Heart right ventricle (tissue), 16 donors: ENCODE measurements at regions of chr12 and their contacts with region 1.

Region 1: DNA sequence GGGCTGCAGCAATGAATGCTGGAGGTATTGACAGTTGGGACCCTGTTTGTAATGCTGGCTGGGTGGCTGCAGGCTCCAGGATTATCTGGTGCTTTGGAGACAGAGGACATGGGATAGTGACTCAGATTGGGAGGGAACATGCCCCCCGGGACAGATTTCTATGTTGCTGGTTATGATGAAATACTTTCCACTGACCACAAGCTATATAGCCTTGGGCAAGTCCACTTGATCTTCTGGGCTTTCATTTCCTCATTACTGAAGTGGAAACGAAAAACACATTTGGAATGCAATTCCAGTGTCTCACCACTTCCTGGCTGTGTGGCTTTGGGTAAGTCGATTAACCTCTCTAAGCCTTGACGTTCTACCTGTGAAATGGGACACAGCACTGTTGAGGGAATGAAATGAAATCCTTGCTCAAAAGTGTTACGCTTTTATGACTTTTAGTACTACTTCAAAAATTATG is 6.3 kb upstream of the TPCN1 start:
- DNase-seq: peak in 1 of 2 donors; percentile 65
- ATAC-seq: peak; percentile 71 to 98 (median 90)
- H3K4me3 ChIP-seq: no peak overlapping the region
- H3K27ac ChIP-seq: peak overlapping the region in 9 of 10 donors; percentile 1 to 68 (median 11)
- H3K4me1 ChIP-seq: peaks cover 0 to 62% (median 10%) of the 10 kb centered on the region in 9 donors
- H3K27me3 ChIP-seq: no peaks in the 10 kb centered on the region
- CTCF ChIP-seq: peak in 2 of 9 donors; percentile 12 to 24

Region 2: DNA sequence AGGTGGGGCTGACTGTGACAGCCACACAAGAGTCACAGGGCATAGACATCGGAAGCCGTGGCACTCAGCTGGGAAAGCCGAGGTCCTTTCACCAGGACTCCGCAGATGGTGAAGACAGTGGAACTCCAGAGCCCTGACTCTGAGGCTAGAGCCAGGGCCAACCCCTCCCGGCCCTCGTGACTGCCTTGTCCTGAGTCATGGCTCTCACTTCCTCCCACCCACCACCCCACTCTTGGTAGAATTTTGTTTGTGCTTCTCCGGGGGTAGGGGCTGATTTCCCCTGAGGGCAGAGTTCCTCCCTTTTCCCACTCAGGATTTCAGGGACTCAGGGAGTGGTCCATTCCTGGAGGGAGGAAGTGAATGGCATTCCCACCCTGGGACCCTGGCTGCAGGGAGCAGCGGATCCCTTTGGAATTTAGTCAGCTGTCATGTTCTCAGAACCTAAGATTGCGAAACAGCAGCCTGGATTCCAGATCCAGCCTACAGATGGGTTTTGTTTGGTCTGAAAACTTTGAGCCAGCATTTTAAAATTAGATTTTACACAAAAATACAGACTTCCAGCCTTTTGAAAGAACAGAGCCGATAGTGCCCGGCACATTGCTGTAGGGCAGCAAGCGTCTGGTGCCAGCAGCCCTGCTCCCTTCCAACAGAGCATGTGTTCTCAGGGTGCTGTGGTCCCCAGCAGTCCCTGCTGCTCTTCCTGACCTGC is 57.0 kb after region 1 on chr12:
- intact Hi-C with region 1: loop called in 1 of 10 experiments (anchors 10 kb)
- DNase-seq: peak; percentile 74 to 85
- ATAC-seq: peak; percentile 78 to 94 (median 90)
- H3K4me3 ChIP-seq: peak overlapping the region in 2 of 10 donors; percentile 2 to 11
- H3K27ac ChIP-seq: peak overlapping the region; percentile 46 to 92 (median 84)
- H3K4me1 ChIP-seq: peaks cover 11 to 46% (median 40%) of the 10 kb centered on the region in 9 donors
- H3K27me3 ChIP-seq: no peaks in the 10 kb centered on the region
- CTCF ChIP-seq: no peak

Region 3: GRCh38 chr12:113334786-113335540 is 120.0 kb after region 1 on chr12 and contains the start of gene SLC8B1:
- intact Hi-C with region 1: loop called in 1 of 10 experiments (anchors 10 kb)
- DNase-seq: peak; percentile 88 to 93
- ATAC-seq: peak; percentile 98 to 100 (median 99)
- H3K4me3 ChIP-seq: peak within 1 kb of the TSS; percentile 64 to 96 (median 80)
- H3K27ac ChIP-seq: peak within 1 kb of the TSS; percentile 37 to 94 (median 84)
- H3K4me1 ChIP-seq: peaks cover 0 to 40% (median 23%) of the 10 kb centered on the region in 9 donors
- H3K27me3 ChIP-seq: no peaks in the 10 kb centered on the region
- CTCF ChIP-seq: no peak
- total RNA-seq, gene SLC8B1: 7.2 to 15.0 (median 11.9) TPM

Region 4: DNA sequence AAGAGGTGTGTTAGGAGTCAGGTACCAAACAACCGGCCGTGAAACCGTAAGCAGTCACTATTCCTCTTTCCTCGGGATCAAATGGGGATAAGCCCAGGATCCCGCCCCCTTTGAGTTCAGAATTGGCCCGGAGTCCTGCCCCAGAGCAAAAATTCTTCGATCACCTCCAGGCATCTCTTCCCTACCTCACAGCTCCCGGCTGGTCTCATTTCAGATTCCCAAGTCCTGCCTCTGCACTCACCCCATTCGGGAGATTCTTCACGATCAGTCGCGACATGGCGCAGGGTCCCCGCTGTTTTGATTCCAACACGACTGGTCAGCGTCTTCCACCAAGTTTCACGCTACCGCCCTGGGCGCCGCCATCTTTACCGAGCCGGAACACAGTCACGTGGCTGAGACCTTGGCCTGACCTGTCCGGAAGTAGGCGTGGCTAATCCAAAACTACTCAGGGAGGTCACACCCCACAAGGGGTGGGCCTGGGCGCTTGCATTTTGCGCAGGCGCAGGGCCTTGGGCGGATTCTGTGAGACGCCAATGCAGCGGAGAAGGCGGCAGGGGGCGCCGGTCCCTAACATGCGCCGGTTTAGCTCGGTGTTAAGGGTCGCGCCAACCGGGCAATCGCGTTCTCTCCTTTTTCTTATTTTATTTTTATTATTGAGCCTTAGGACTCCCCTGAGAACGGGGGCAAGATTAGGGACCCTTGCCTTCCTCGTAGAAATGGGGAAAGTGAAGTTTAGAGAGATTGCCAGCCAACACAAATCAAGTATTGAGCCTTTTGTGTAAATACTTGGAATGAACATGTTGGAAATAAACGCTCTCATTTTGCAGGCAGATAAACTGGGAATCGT is 751.2 kb after region 1 on chr12 and contains the start of gene RBM19:
- intact Hi-C with region 1: loop called in 1 of 10 experiments (anchors 10 kb)
- DNase-seq: peak; percentile 97 to 98
- ATAC-seq: peak; percentile 100
- H3K4me3 ChIP-seq: peak within 1 kb of the TSS; percentile 50 to 94 (median 68)
- H3K27ac ChIP-seq: peak within 1 kb of the TSS; percentile 0 to 81 (median 62)
- H3K4me1 ChIP-seq: peaks cover 5 to 24% (median 13%) of the 10 kb centered on the region in 9 donors
- H3K27me3 ChIP-seq: no peaks in the 10 kb centered on the region
- CTCF ChIP-seq: peak; percentile 88 to 100 (median 94)
- total RNA-seq, gene RBM19: 13.3 to 20.9 (median 16.2) TPM